GM12878 (cell line): ENCODE measurements at regions of chrX and their contacts with region 1.

Region 1: DNA sequence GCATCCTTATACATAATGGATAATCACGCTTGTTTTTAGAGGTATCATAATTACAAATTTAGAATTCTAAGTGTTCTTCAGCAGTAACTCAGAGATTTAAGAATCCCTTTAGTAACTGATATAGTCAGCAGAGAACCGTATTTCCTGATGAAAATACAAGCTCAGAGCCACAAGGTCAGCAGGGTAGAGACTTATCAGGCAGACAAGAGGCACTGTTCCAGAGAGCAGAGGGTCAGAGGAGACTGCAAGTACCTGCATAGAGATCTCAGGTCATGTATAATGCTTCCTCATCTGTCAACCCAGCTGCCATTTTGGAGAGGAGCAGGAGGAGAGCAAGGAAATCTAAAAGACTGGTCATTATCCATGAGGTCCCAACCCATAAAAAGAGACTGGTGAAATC is 787.1 kb upstream of the FTHL17 start:
- DNase-seq: no peak
- ATAC-seq: no peak
- H3K4me3 ChIP-seq: no peak overlapping the region
- H3K27ac ChIP-seq: no peak overlapping the region
- H3K4me1 ChIP-seq: no peaks in the 10 kb centered on the region
- H3K27me3 ChIP-seq: no peaks in the 10 kb centered on the region
- CTCF ChIP-seq: no peak
- EP300 ChIP-seq: no peak
- POLR2A ChIP-seq: no peak
- RAD21 ChIP-seq: no peak

Region 2: GRCh38 chrX:31909850-31910547 is 51.1 kb after region 1 on chrX:
- CTCF ChIA-PET with region 1: no interaction called
- POLR2A ChIA-PET with region 1: no interaction called
- RAD21 ChIA-PET with region 1: no interaction called
- SMC1A ChIA-PET with region 1: no interaction called
- in situ Hi-C with region 1: no loop called
- intact Hi-C with region 1: loop called (anchors 10 kb)
- DNase-seq: no peak
- ATAC-seq: no peak
- H3K4me3 ChIP-seq: no peak overlapping the region
- H3K27ac ChIP-seq: no peak overlapping the region
- H3K4me1 ChIP-seq: no peaks in the 10 kb centered on the region
- H3K27me3 ChIP-seq: no peaks in the 10 kb centered on the region
- CTCF ChIP-seq: no peak
- EP300 ChIP-seq: no peak
- POLR2A ChIP-seq: no peak
- RAD21 ChIP-seq: no peak